ENCODE measurements at regions of chr18 and their contacts with region 1.

Region 1: DNA sequence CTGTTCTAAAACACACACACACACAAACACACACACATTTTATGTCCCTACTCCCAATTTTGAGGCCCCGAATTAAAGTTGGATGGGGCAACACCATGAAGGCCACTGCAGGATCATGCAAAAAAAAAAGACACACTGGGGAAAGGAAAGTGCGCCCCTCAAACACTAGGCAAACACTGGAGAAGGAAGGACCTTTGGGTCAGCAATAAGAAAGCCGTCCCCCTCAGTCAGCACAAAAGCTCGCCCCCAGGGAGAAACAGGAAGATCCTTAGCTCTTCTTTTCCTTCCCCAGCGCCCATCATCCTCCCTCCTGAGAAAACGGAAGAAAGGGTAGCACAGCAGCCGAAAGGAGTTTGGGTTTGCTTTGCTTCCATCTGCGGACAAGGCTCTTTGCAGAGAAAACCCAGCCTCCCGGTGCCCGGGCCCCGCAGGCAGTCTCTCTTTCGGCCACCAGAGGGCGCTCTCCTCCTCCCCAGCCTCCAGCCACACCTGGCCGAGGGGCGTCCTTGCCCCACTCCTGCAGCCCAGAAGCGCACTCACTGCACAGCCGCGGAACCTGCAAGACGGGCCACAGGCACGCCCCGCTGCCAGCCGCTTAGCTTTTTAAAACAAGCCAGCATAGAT is 248.5 kb downstream of the CDH20 start:
- H3K4me3 ChIP-seq: peak overlapping the region; percentile 21
- H3K27ac ChIP-seq: no peak overlapping the region
- H3K4me1 ChIP-seq: peaks cover 2% of the 10 kb centered on the region; the same call in 1 of the 2 replicates
- CTCF ChIP-seq: peak; percentile 83

Region 2: DNA sequence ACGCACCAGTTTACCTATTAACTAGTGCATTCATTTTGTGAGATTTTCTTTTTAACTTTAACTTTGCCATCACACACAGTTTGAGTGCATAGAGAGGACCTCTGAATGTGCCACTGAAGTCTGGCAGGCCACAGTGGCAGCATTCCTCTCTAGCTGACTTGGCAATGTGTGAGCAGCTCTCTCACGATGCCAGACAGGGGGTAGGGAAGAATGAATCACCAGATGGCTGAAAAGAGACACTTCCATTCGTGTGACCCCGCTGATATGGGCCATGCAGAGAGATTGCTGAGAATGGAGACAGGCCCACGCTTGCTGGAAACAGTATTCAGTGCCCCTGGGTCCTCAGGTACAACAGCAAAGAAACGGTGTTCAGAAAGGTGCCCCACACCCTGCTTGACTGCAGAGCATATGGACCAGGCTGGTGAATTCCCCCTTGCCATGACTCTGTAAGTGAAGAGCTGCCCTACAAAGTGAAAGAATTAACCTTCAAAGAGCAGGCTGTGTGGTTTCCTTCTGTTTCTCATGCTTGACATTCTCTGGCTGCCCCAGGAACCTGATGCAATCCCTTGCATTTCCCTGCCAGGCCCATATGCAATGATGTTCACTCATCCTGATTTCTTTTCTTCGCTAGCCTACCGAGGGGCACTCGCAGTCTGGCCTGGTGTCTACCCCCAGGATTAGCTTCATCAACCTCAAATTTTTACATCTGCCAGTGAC is 12.4 kb before region 1 on chr18:
- CTCF ChIA-PET with region 1: interaction called, 10 read pairs
- POLR2A ChIA-PET with region 1: no interaction called
- H3K4me3 ChIP-seq: no peak overlapping the region
- H3K27ac ChIP-seq: no peak overlapping the region
- H3K4me1 ChIP-seq: no peaks in the 10 kb centered on the region
- CTCF ChIP-seq: no peak

Region 3: DNA sequence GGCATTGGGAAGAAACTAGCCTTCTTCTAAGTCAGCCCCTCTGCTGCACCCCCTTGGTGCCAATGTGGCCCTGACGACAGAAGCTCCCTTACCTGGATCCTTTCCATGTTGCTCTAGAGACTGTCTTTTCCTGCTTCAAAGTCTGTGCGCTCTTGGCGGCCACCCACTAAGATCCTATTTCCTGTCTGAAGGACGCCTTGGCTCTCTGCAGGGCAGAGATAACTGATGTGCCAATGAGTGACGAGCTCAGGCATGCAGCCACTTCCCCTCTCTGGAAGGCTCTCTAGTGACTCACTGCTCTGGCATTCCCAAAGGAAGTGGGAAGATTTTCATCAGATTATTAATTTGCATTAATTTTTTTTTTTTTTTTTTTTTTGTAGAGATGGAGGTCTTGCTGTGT is 25.1 kb after region 1 on chr18:
- CTCF ChIA-PET with region 1: interaction called, 19 read pairs
- POLR2A ChIA-PET with region 1: no interaction called
- H3K4me3 ChIP-seq: peak overlapping the region; percentile 29
- H3K27ac ChIP-seq: no peak overlapping the region
- H3K4me1 ChIP-seq: no peaks in the 10 kb centered on the region; the same call in 1 of the 2 replicates
- CTCF ChIP-seq: no peak

Region 4: GRCh38 chr18:61901323-61901986 is 319.8 kb after region 1 on chr18:
- CTCF ChIA-PET with region 1: interaction called, 29 read pairs
- POLR2A ChIA-PET with region 1: no interaction called
- H3K4me3 ChIP-seq: no peak overlapping the region
- H3K27ac ChIP-seq: no peak overlapping the region
- H3K4me1 ChIP-seq: no peaks in the 10 kb centered on the region
- CTCF ChIP-seq: peak; percentile 83